Activated CD8-positive, alpha-beta T cell treated with anti-CD3 and anti-CD28 coated beads, Interleukin-2, amount 10 ng/mL, durations not matched to agents 7 days and 5 days (primary cell): ENCODE measurements at regions of chr20 and their contacts with region 1.

Region 1: DNA sequence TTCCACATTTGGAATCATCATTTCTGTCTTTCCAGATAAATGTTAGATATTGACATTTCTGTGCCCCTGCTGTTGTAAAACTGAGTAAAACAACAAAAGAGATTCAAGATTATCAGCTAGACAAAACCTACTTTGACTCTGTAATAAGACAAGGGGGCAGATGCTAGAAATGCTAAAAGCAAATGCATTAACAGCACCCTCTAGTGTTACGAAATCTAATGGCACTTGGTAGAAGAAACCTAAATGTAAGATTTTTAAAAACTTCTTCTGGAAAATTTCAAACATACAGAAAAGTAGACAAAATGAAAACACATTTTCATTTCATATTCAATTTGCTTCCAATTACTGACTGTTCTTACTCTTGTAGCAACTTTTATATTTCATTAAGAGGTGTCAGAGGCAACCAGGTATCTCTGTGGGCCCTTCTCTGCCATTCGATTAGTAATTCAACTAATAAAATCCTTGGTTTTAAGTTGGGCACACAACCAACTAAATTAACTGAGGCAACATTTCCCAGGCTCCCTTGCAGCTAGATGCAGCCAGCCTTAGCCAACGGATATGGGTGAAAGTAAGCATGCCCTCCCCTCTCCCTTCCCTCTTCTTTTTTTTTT is 45.0 kb downstream of the SLC23A2 start:
- DNase-seq: no peak
- ATAC-seq: no peak
- H3K4me3 Mint-ChIP-seq: no peak overlapping the region
- H3K27ac Mint-ChIP-seq: no peak overlapping the region
- H3K4me1 Mint-ChIP-seq: peaks cover 5% of the 10 kb centered on the region
- H3K27me3 Mint-ChIP-seq: no peaks in the 10 kb centered on the region

Region 2: GRCh38 chr20:4740774-4741431 is 215.4 kb before region 1 on chr20:
- CTCF ChIA-PET with region 1: interaction called, 13 read pairs
- POLR2A ChIA-PET with region 1: no interaction called
- DNase-seq: peak; percentile 78
- ATAC-seq: peak; percentile 39
- H3K4me3 Mint-ChIP-seq: no peak overlapping the region
- H3K27ac Mint-ChIP-seq: no peak overlapping the region
- H3K4me1 Mint-ChIP-seq: no peaks in the 10 kb centered on the region
- H3K27me3 Mint-ChIP-seq: peaks cover 21% of the 10 kb centered on the region

Region 3: GRCh38 chr20:4813863-4814695 is 142.2 kb before region 1 on chr20:
- CTCF ChIA-PET with region 1: interaction called, 16 read pairs
- POLR2A ChIA-PET with region 1: no interaction called
- DNase-seq: peak; percentile 81
- ATAC-seq: peak; percentile 74
- H3K4me3 Mint-ChIP-seq: peak overlapping the region; percentile 94
- H3K27ac Mint-ChIP-seq: peak overlapping the region; percentile 98
- H3K4me1 Mint-ChIP-seq: peaks cover 76% of the 10 kb centered on the region
- H3K27me3 Mint-ChIP-seq: no peaks in the 10 kb centered on the region

Region 4: DNA sequence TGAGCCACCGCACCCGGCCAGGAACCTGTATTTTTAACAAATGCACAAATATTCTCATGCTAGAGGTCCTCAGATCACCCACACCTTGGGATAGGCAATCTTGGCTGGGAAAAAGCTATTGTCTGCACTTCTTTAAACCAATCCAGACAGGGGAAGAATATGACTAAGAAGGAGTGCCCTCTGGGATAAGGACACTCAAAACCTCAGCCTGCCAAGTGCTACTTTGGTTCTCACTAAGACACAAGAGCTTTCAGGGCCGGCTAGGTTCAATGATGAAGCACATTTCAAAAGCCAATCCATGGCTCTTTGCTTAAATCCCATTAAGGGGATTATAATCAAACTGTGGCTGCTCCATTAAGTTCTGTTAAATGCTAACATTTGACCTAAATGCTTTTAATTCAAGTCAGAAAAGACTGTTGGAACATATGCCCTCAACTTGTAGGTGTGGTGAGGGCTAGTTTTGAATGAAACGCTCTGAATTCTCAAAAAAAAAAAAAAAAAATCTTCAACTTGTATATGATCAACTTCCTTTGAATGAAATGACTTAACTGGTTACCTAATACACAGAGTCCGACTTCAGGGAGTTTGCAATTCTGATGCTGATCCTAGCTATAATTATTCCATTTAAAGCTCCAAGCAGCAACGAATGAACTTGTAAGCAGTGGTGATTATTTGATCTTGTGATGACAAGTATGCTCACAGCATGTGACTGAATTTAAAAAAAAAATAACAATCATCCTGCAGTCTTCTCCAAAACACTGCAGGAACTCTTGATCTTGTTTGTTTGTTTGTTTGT is 11.6 kb before region 1 on chr20:
- CTCF ChIA-PET with region 1: interaction called, 11 read pairs
- POLR2A ChIA-PET with region 1: interaction called, 3 read pairs
- DNase-seq: no peak
- ATAC-seq: no peak
- H3K4me3 Mint-ChIP-seq: no peak overlapping the region
- H3K27ac Mint-ChIP-seq: no peak overlapping the region
- H3K4me1 Mint-ChIP-seq: peaks cover 25% of the 10 kb centered on the region
- H3K27me3 Mint-ChIP-seq: no peaks in the 10 kb centered on the region

Region 5: DNA sequence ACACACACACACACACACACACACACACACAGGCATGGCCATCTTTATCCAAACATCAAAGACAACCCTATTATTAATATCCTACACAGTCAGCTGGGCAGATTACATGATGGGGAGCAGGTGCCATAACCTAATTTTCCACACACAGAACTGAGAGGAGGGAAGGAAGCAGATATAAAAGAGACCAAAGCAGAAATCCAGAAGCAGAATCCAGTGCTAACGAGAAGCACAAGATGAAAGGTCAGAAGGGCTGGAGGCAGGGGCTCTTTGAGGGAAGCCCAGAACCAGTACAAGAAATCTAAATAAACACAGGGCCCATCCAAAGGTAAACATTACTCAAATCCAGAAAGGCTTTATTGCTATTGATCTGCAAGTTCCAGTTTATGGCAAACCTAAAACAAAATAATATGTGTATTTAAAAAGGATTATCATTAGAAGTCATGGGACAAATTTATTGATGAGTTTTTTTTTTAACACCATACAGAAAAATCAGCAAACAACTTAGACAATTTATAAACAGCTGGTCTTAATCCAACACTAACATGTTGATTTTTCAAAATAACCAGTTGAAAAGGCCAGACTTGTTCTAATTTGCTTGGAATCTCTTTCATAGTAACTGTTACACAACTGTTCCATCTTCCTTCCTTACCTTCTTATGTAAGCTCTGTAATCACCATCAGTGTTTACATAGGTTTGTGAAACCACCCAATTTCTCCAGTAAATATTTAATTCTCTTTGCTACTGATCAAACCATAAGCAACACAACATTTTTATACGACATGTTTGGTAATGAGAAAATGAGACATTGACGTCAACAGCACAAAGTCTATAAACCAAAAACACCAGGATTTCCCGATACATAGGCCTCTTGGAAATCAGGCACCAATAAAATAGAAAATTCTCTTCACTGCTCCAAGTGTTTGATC is 10.8 kb after region 1 on chr20:
- CTCF ChIA-PET with region 1: interaction called, 18 read pairs
- POLR2A ChIA-PET with region 1: interaction called, 3 read pairs
- DNase-seq: no peak
- ATAC-seq: no peak
- H3K4me3 Mint-ChIP-seq: no peak overlapping the region
- H3K27ac Mint-ChIP-seq: no peak overlapping the region
- H3K4me1 Mint-ChIP-seq: peaks cover 10% of the 10 kb centered on the region
- H3K27me3 Mint-ChIP-seq: no peaks in the 10 kb centered on the region

Region 6: DNA sequence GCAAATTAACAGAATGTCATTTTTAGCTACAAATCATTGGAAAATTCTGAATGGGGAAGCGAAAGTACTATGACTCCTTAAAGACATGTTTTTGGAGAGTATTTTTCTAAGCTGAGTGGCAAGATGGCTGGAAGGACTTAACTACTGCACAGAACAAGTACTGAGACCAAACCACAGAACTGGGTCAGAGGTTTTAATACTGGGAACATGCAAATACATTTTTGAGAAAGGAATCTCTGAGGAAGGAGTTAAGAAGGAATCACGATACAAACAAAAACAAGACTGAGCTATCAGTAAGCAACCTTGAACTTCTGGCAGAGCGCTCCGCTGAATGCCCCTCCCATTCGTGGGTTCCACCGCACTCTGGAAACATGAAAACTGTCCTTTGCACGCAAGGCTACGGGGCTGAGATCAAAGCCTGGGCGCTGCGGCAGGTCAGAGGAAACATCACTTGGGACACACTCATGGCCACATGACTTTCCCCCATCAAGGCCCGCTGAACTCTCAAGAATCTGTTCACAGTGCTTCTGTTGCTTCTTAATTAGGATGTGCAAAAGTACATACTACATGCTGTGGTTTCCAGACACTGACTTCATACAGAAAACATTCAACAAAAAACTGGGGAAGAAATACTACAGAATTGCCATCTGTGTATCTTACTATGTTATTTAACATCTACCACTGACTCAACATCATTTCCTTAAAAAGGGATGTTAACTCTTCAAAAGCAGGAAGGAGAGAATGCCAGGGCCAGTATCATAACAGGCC is 17.2 kb after region 1 on chr20:
- CTCF ChIA-PET with region 1: interaction called, 13 read pairs
- POLR2A ChIA-PET with region 1: no interaction called
- DNase-seq: peak; percentile 75
- ATAC-seq: peak; percentile 86
- H3K4me3 Mint-ChIP-seq: peak overlapping the region; percentile 72
- H3K27ac Mint-ChIP-seq: peak overlapping the region; percentile 89
- H3K4me1 Mint-ChIP-seq: peaks cover 24% of the 10 kb centered on the region
- H3K27me3 Mint-ChIP-seq: no peaks in the 10 kb centered on the region

Region 7: GRCh38 chr20:5113615-5113986 is 157.3 kb after region 1 on chr20:
- CTCF ChIA-PET with region 1: no interaction called
- POLR2A ChIA-PET with region 1: no interaction called
- DNase-seq: no peak
- ATAC-seq: no peak
- H3K4me3 Mint-ChIP-seq: peak overlapping the region; percentile 87
- H3K27ac Mint-ChIP-seq: peak overlapping the region; percentile 90
- H3K4me1 Mint-ChIP-seq: peaks cover 56% of the 10 kb centered on the region
- H3K27me3 Mint-ChIP-seq: no peaks in the 10 kb centered on the region

Region 8: GRCh38 chr20:5164645-5165625 is 208.6 kb after region 1 on chr20:
- CTCF ChIA-PET with region 1: no interaction called
- POLR2A ChIA-PET with region 1: no interaction called
- DNase-seq: no peak
- ATAC-seq: no peak
- H3K4me3 Mint-ChIP-seq: no peak overlapping the region
- H3K27ac Mint-ChIP-seq: no peak overlapping the region
- H3K4me1 Mint-ChIP-seq: peaks cover 44% of the 10 kb centered on the region
- H3K27me3 Mint-ChIP-seq: no peaks in the 10 kb centered on the region